ENCODE measurements at regions of chr4 and their contacts with region 1.

Region 1: DNA sequence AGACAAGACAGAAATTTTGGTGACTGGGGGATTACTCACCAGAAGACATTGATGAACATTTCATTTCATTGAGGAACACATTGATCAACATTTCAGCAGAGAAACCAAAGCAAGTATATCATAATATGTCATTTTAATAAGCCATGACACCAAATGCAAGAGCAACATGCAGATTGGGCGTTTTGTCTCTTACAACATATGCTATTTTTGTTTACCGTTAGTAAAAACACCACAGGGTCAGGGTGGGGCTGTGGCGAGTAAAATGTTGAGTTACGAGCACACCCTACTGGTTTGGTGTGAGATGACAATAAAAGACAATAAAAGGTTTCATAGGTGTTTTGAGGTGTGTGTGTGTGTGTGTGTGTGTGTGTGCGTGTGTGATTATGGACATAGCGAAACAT is 294.5 kb downstream of the PDGFC start:
- DNase-seq: no peak
- ATAC-seq: peak; percentile 87
- H3K4me3 ChIP-seq: no peak overlapping the region
- H3K27ac ChIP-seq: no peak overlapping the region
- H3K4me1 ChIP-seq: no peaks in the 10 kb centered on the region
- H3K27me3 ChIP-seq: no peaks in the 10 kb centered on the region
- CTCF ChIP-seq: peak; percentile 29 to 51 (median 36); a peak in 4 of 6 replicates
- EP300 ChIP-seq: no peak
- POLR2A ChIP-seq: no peak
- RAD21 ChIP-seq: peak; percentile 77

Region 2: DNA sequence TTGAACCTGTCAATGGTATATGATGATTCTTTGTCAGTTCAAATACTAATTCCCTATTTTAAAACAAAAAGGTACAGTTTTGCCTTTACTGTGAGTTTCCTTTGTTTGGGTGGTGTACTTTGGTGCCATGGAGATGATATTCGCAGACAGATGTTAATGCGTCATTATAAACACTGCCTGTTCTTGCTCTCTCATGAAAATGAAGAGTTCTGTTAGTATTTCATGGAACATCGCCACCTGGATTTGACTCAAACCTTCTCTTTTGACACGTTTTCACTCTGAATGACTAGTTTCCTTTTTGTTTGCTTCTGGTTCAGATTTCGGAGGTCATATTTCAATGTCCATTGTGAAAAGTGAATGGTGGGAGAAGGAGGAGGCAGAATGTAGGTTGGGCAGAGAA is 716.6 kb before region 1 on chr4:
- CTCF ChIA-PET with region 1: no interaction called
- POLR2A ChIA-PET with region 1: interaction called, 3 read pairs
- RAD21 ChIA-PET with region 1: no interaction called
- SMC1A ChIA-PET with region 1: interaction called, 3 read pairs
- in situ Hi-C with region 1: no loop called
- intact Hi-C with region 1: loop called (anchors 5 kb)
- DNase-seq: no peak
- ATAC-seq: no peak
- H3K4me3 ChIP-seq: no peak overlapping the region
- H3K27ac ChIP-seq: no peak overlapping the region
- H3K4me1 ChIP-seq: no peaks in the 10 kb centered on the region
- H3K27me3 ChIP-seq: no peaks in the 10 kb centered on the region
- CTCF ChIP-seq: no peak
- EP300 ChIP-seq: no peak
- POLR2A ChIP-seq: no peak
- RAD21 ChIP-seq: no peak

Region 3: DNA sequence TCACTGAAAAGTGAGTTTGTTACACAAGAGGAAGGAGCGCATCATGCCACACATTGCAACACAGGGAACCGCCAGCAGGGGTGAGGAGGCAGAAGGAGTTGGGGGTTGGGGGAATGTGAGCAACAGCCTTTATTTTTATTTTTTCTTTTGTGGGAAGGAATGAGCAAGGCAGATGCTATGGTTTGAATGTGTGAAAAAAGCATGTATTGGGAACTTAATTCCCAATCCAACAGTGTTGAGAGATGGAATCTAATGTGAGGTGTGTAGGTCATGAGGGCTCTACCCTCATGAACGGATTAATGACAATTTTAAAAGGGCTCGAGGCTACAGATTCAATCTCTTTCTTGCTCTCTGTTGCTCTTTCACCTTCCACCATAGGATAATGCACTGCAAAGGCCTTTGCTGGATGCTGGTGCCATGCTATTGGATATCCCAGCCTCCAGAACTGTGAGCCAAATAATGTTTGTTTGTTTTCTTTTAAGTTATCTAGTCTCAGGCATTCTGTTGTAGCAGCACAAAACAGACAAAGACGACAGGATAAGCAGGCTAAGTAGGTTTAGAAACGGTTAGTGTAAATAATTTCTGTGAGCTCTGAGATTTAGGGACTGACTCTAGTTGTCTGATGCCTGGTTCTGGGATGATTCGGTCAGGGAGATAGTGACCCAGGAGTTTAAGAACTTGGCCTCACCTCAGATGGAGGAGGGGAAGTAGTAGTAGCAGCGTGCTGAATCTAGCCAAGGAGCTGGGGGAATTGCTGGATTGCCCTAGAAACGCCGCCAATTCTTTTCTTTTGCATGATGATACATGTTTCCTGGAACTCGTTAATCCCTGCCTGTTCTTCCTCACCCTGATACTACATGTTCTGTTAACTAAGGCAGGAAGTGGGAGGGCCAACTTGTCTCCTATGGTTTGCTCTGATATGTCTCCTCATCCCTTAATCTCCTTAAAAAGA is 566.9 kb before region 1 on chr4:
- CTCF ChIA-PET with region 1: interaction called, 8 read pairs
- POLR2A ChIA-PET with region 1: no interaction called
- RAD21 ChIA-PET with region 1: no interaction called
- SMC1A ChIA-PET with region 1: interaction called, 6 read pairs
- in situ Hi-C with region 1: no loop called
- intact Hi-C with region 1: loop called (anchors 1 kb)
- DNase-seq: no peak
- ATAC-seq: peak; percentile 69
- H3K4me3 ChIP-seq: no peak overlapping the region
- H3K27ac ChIP-seq: no peak overlapping the region
- H3K4me1 ChIP-seq: no peaks in the 10 kb centered on the region
- H3K27me3 ChIP-seq: no peaks in the 10 kb centered on the region
- CTCF ChIP-seq: peak in 2 of 3 experiments; percentile 23 to 40; a peak in 2 of 6 replicates
- EP300 ChIP-seq: no peak
- POLR2A ChIP-seq: no peak
- RAD21 ChIP-seq: no peak

Region 4: GRCh38 chr4:156475322-156475721 is 201.8 kb before region 1 on chr4:
- CTCF ChIA-PET with region 1: interaction called, 8 read pairs
- POLR2A ChIA-PET with region 1: no interaction called
- RAD21 ChIA-PET with region 1: interaction called, 6 read pairs
- SMC1A ChIA-PET with region 1: interaction called, 24 read pairs
- in situ Hi-C with region 1: no loop called
- intact Hi-C with region 1: loop called (anchors 1 kb)
- DNase-seq: no peak
- ATAC-seq: peak; percentile 61
- H3K4me3 ChIP-seq: no peak overlapping the region
- H3K27ac ChIP-seq: no peak overlapping the region
- H3K4me1 ChIP-seq: no peaks in the 10 kb centered on the region
- H3K27me3 ChIP-seq: no peaks in the 10 kb centered on the region
- CTCF ChIP-seq: peak in 2 of 3 experiments; percentile 13 to 34; a peak in 2 of 6 replicates
- EP300 ChIP-seq: no peak
- POLR2A ChIP-seq: no peak
- RAD21 ChIP-seq: peak; percentile 68